Naive thymus-derived CD8-positive, alpha-beta T cell (primary cell): ENCODE measurements at regions of chr22 and their contacts with region 1.

Region 1: GRCh38 chr22:35539910-35540594 is 579 bp upstream of the RASD2 start:
- DNase-seq: peak; percentile 39 to 80 (median 67)
- ATAC-seq: peak; percentile 81 to 86
- H3K4me3 Mint-ChIP-seq: peak overlapping the region; percentile 68 to 87 (median 76)
- H3K27ac Mint-ChIP-seq: peak overlapping the region in 3 of 10 donors; percentile 15 to 46 (median 18)
- H3K4me1 Mint-ChIP-seq: peaks cover 11 to 25% (median 22%) of the 10 kb centered on the region in 4 donors
- H3K27me3 Mint-ChIP-seq: peaks cover 14 to 38% (median 21%) of the 10 kb centered on the region in 5 donors

Region 2: GRCh38 chr22:35489239-35489638 is 50.8 kb before region 1 on chr22:
- POLR2A ChIA-PET with region 1: interaction called, 12 read pairs
- DNase-seq: no peak
- ATAC-seq: no peak
- H3K4me3 Mint-ChIP-seq: no peak overlapping the region
- H3K27ac Mint-ChIP-seq: no peak overlapping the region
- H3K4me1 Mint-ChIP-seq: no peaks in the 10 kb centered on the region
- H3K27me3 Mint-ChIP-seq: peaks cover 10 to 52% (median 44%) of the 10 kb centered on the region in 5 donors

Region 3: GRCh38 chr22:35510481-35510934 is 29.5 kb before region 1 on chr22:
- POLR2A ChIA-PET with region 1: no interaction called
- DNase-seq: no peak
- ATAC-seq: no peak
- H3K4me3 Mint-ChIP-seq: no peak overlapping the region
- H3K27ac Mint-ChIP-seq: no peak overlapping the region
- H3K4me1 Mint-ChIP-seq: no peaks in the 10 kb centered on the region
- H3K27me3 Mint-ChIP-seq: peaks cover 0 to 25% (median 9%) of the 10 kb centered on the region in 5 donors

Region 4: DNA sequence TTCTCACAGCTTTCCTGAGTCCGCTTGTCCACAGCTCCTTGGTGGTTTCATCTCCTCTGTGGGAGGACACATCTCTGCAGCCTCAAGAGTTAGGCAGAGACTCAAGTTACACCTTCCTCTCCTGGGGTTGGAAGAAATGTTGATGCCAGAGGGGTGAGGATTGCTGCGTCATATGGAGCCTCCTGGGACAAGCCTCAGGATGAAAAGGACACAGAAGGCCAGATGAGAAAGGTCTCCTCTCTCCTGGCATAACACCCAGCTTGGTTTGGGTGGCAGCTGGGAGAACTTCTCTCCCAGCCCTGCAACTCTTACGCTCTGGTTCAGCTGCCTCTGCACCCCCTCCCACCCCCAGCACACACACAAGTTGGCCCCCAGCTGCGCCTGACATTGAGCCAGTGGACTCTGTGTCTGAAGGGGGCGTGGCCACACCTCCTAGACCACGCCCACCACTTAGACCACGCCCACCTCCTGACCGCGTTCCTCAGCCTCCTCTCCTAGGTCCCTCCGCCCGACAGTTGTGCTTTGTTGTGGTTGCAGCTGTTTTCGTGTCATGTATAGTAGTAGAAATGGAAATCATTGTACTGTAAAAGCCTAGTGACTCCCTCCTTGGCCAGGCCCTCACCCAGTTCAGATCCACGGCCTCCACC is 12.3 kb after region 1 on chr22:
- POLR2A ChIA-PET with region 1: interaction called, 15 read pairs
- DNase-seq: peak; percentile 67 to 93 (median 85)
- ATAC-seq: peak; percentile 99
- H3K4me3 Mint-ChIP-seq: peak overlapping the region; percentile 3 to 70 (median 54)
- H3K27ac Mint-ChIP-seq: peak overlapping the region in 8 of 10 donors; percentile 4 to 91 (median 28)
- H3K4me1 Mint-ChIP-seq: peaks cover 4 to 20% (median 15%) of the 10 kb centered on the region in 4 donors
- H3K27me3 Mint-ChIP-seq: no peaks in the 10 kb centered on the region